Activated naive CD4-positive, alpha-beta T cell treated with anti-CD3 and anti-CD28 coated beads, Interleukin-2, amount 10 ng/mL, durations not matched to agents 7 days and 5 days (primary cell): ENCODE measurements at regions of chr7 and their contacts with region 1.

Region 1: DNA sequence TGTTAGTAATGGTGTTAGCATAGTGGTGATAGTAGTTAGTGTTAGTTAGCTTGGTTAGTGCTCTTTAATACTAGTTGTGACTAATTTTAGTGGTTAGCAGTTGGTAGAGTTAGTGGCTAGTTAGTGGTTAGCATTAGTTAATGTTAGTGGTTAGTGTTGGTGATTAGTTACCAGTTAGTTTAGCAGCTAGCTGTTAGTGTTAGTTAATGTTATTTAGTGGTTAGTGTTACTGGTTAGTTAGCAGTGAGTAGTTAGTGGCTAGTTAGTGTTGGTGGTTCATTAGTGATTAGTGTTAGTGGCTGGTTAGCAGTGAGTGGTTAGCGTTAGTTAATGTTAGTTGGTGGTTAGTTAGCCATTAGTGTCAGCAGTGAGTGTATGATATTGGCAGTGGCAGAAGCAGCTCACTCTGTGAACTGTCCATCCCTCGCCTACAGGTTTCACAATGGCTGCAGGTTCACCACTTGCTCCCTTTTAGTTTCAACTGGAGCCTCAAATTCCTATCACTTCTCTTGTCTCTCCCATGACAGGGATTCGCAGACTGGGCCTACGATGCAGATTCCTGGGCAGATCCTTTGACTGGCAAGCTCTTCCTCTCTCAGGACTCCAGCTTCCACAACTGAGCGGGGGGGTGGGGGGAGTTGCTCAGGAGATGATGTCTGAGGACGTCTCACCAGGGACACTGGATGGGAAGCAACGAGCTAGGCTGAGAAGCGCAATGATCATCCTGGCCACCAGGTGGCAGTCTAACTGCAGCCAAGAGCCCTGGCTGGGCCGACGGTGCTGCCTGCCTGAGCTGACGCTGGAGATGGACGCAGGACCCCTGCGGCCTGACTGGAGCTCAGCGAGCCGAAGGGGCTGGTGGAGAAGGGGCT is 19.5 kb downstream of the GHRHR start:
- DNase-seq: peak; percentile 83
- H3K4me3 Mint-ChIP-seq: no peak overlapping the region
- H3K27ac Mint-ChIP-seq: no peak overlapping the region
- H3K4me1 Mint-ChIP-seq: peaks cover 12% of the 10 kb centered on the region
- H3K27me3 Mint-ChIP-seq: peaks cover 41% of the 10 kb centered on the region

Region 2: GRCh38 chr7:31049005-31049765 is 65.9 kb after region 1 on chr7:
- CTCF ChIA-PET with region 1: no interaction called
- DNase-seq: no peak
- H3K4me3 Mint-ChIP-seq: no peak overlapping the region
- H3K27ac Mint-ChIP-seq: no peak overlapping the region
- H3K4me1 Mint-ChIP-seq: no peaks in the 10 kb centered on the region
- H3K27me3 Mint-ChIP-seq: peaks cover 67% of the 10 kb centered on the region

Region 3: DNA sequence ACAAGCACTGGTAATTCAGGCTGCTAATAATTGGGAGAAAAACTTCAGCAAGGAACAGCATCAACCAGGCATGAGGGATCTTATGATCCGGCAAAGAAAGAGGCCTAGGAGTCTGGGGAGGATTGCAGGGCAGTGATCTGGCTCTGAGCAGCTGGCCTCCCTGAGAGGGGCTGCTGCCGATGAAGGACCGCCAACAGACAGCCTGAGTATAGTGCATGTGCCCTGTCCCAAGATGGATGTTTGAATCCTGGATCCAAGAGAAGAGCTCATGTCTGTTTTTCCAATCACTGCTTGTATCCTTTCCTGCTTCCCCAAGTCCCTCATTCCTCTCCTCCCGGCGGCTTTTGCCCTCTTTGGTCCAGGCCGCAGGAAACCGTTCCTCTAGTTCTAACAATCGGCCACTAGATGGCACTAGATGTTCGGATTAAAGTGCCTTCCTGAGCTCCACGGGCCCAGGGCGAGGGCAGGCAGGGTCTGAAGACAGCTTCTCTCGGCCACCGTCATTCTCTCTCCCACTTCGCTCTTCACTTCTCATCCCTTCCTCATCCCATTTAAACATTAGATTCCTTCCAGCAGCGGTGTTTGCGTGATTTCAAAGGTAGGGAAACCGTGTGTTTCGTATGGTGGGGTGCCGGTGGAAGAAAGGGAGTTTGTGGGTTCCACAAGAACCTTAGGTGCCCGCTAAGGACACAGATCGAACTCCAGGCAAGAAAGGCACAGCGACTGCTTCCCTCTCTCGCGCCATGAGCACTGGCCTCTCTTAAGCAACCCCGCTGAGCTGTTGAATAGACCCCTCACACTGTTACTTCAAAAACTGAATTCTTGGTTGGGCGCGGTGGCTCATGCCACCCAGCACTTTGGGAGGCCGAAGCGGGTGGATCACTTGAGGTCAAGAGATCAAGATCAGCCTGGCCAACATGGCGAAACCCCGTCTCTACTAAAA is 151.2 kb after region 1 on chr7:
- CTCF ChIA-PET with region 1: interaction called, 12 read pairs
- DNase-seq: peak; percentile 63
- H3K4me3 Mint-ChIP-seq: no peak overlapping the region
- H3K27ac Mint-ChIP-seq: no peak overlapping the region
- H3K4me1 Mint-ChIP-seq: no peaks in the 10 kb centered on the region
- H3K27me3 Mint-ChIP-seq: peaks cover 4% of the 10 kb centered on the region

Region 4: DNA sequence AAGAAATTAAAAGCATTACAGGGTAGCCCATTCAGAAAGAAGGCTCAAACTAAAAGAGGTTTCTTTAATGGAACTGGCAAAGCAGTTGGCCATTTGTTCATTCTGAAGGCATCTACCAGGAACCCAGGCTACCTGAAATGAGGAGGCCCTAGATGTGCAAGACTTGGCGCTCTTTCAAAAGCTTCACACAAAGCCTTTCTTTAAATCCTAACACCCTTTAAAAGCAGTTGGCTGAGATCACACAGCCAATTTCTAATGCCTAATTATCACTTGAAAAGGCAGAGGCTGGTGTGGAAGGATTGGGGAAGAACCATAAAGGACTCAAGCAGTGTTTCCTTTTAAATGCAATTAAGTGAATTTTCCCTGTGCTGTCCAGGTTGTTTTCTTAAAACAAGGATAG is 726.9 kb after region 1 on chr7:
- CTCF ChIA-PET with region 1: no interaction called
- DNase-seq: no peak
- H3K4me3 Mint-ChIP-seq: no peak overlapping the region
- H3K27ac Mint-ChIP-seq: no peak overlapping the region
- H3K4me1 Mint-ChIP-seq: no peaks in the 10 kb centered on the region
- H3K27me3 Mint-ChIP-seq: no peaks in the 10 kb centered on the region